ENCODE measurements at regions of chr17 and their contacts with region 1.

Region 1: GRCh38 chr17:79393358-79394202 is 217.3 kb downstream of the RBFOX3 start:
- DNase-seq: peak; percentile 69
- H3K4me3 ChIP-seq: no peak overlapping the region
- H3K27ac ChIP-seq: no peak overlapping the region
- H3K4me1 ChIP-seq: no peaks in the 10 kb centered on the region
- H3K27me3 ChIP-seq: peaks cover 7% of the 10 kb centered on the region
- CTCF ChIP-seq: peak; percentile 75 to 94 (median 86)
- POLR2A ChIP-seq: no peak

Region 2: DNA sequence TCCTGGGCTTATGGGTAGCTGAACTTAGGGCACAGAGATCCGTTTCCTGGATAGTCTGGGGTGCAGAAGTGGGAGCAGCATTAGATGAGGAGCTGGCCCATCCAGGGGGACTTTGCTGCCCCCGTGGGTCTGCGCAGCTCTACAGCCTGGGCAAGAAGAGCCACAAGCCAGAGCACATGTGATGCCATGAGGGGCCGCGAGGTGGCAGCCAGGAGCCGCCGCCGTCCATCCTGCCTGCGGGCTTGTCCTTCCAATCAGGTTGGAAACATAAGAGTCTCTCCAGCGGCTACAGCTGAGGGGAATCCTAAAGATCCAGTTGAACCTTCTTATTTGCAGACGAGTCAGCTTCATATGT is 347.8 kb before region 1 on chr17:
- intact Hi-C with region 1: loop called (anchors 5 kb)
- DNase-seq: peak; percentile 68
- H3K4me3 ChIP-seq: no peak overlapping the region
- H3K27ac ChIP-seq: peak overlapping the region in 1 of 2 donors; percentile 31
- H3K4me1 ChIP-seq: no peaks in the 10 kb centered on the region
- H3K27me3 ChIP-seq: no peaks in the 10 kb centered on the region
- CTCF ChIP-seq: peak; percentile 78 to 92 (median 86)
- POLR2A ChIP-seq: no peak

Region 3: DNA sequence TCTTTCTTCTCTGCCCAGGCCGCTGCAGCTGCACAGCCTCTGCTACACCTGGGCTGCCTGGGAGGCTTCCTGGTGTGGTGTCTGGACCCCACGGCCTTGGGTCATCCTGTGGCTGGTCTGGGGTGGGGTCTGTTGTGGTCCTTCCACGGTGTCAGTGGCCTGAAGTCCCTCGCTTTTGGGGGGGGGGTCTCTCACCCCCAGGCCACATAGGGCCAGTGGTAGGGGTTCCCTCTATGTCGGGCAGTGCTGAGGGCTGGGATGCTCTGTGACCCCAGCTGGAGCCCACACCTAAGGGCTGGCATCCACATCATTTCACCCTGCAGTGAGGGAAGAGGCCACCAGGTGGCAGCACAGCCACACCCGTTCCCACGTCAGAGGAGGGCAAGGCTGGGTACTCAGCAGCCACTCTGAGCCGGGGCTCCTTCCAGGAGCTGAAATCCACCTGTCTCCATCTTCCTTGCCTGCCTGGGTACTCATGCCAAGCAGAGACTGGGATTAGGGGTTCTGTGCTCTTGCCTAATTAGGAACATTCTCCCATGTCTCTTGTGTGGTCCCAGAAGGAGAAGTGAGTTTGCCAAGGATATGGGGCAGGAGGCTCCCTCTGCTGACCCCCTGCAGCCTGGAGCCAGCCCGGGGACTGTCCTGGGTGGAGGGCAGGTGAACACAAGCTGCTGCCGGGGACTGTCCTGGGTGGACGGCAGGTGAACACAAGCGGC is 306.0 kb before region 1 on chr17:
- intact Hi-C with region 1: loop called (anchors 2 kb)
- DNase-seq: peak; percentile 68
- H3K4me3 ChIP-seq: no peak overlapping the region
- H3K27ac ChIP-seq: no peak overlapping the region
- H3K4me1 ChIP-seq: no peaks in the 10 kb centered on the region
- H3K27me3 ChIP-seq: no peaks in the 10 kb centered on the region
- CTCF ChIP-seq: peak; percentile 87 to 94 (median 93)
- POLR2A ChIP-seq: no peak

Region 4: GRCh38 chr17:79188048-79188447 is 205.5 kb before region 1 on chr17:
- intact Hi-C with region 1: loop called (anchors 2 kb)
- DNase-seq: no peak
- H3K4me3 ChIP-seq: no peak overlapping the region
- H3K27ac ChIP-seq: no peak overlapping the region
- H3K4me1 ChIP-seq: peaks cover 4% of the 10 kb centered on the region
- H3K27me3 ChIP-seq: peaks cover 39% of the 10 kb centered on the region
- CTCF ChIP-seq: peak in 3 of 4 experiments; percentile 27 to 53 (median 51)
- POLR2A ChIP-seq: no peak

Region 5: GRCh38 chr17:79242873-79243602 is 150.5 kb before region 1 on chr17:
- intact Hi-C with region 1: no loop called
- DNase-seq: no peak
- H3K4me3 ChIP-seq: no peak overlapping the region
- H3K27ac ChIP-seq: no peak overlapping the region
- H3K4me1 ChIP-seq: no peaks in the 10 kb centered on the region
- H3K27me3 ChIP-seq: no peaks in the 10 kb centered on the region
- CTCF ChIP-seq: no peak
- POLR2A ChIP-seq: no peak

Region 6: GRCh38 chr17:79684132-79684985 is 290.8 kb after region 1 on chr17:
- intact Hi-C with region 1: no loop called
- DNase-seq: no peak
- H3K4me3 ChIP-seq: no peak overlapping the region
- H3K27ac ChIP-seq: no peak overlapping the region
- H3K4me1 ChIP-seq: no peaks in the 10 kb centered on the region
- H3K27me3 ChIP-seq: no peaks in the 10 kb centered on the region
- CTCF ChIP-seq: no peak
- POLR2A ChIP-seq: no peak